Stomach (tissue), 19 donors: ENCODE measurements at regions of chr22 and their contacts with region 1.

Region 1: GRCh38 chr22:50612528-50613221 is 12.1 kb downstream of the MAPK8IP2 start:
- DNase-seq: peak in 1 of 2 donors; percentile 62
- H3K4me3 ChIP-seq: no peak overlapping the region
- H3K27ac ChIP-seq: peak overlapping the region; percentile 74 to 85 (median 81)
- H3K4me1 ChIP-seq: peaks cover 6 to 15% (median 11%) of the 10 kb centered on the region in 4 donors
- H3K27me3 ChIP-seq: peaks cover 0 to 65% (median 0%) of the 10 kb centered on the region in 3 donors
- CTCF ChIP-seq: no peak
- EP300 ChIP-seq: no peak
- POLR2A ChIP-seq: no peak

Region 2: GRCh38 chr22:50508897-50509296 is 103.8 kb before region 1 on chr22:
- intact Hi-C with region 1: no loop called
- DNase-seq: peak in 1 of 2 donors; percentile 21
- H3K4me3 ChIP-seq: peak overlapping the region; percentile 67 to 95 (median 86)
- H3K27ac ChIP-seq: peak overlapping the region in 4 of 5 donors; percentile 91 to 98 (median 98)
- H3K4me1 ChIP-seq: peaks cover 23 to 50% (median 40%) of the 10 kb centered on the region in 4 donors
- H3K27me3 ChIP-seq: no peaks in the 10 kb centered on the region
- CTCF ChIP-seq: no peak
- EP300 ChIP-seq: no peak
- POLR2A ChIP-seq: no peak

Region 3: GRCh38 chr22:50551160-50551752 is 61.4 kb before region 1 on chr22:
- intact Hi-C with region 1: loop called (anchors 10 kb)
- DNase-seq: no peak
- H3K4me3 ChIP-seq: no peak overlapping the region
- H3K27ac ChIP-seq: no peak overlapping the region
- H3K4me1 ChIP-seq: peaks cover 12 to 33% (median 19%) of the 10 kb centered on the region in 4 donors
- H3K27me3 ChIP-seq: peaks cover 11 to 47% (median 26%) of the 10 kb centered on the region in 3 donors
- CTCF ChIP-seq: no peak
- EP300 ChIP-seq: no peak
- POLR2A ChIP-seq: no peak